T-cell (primary cell): ENCODE measurements at regions of chr12 and their contacts with region 1.

Region 1: DNA sequence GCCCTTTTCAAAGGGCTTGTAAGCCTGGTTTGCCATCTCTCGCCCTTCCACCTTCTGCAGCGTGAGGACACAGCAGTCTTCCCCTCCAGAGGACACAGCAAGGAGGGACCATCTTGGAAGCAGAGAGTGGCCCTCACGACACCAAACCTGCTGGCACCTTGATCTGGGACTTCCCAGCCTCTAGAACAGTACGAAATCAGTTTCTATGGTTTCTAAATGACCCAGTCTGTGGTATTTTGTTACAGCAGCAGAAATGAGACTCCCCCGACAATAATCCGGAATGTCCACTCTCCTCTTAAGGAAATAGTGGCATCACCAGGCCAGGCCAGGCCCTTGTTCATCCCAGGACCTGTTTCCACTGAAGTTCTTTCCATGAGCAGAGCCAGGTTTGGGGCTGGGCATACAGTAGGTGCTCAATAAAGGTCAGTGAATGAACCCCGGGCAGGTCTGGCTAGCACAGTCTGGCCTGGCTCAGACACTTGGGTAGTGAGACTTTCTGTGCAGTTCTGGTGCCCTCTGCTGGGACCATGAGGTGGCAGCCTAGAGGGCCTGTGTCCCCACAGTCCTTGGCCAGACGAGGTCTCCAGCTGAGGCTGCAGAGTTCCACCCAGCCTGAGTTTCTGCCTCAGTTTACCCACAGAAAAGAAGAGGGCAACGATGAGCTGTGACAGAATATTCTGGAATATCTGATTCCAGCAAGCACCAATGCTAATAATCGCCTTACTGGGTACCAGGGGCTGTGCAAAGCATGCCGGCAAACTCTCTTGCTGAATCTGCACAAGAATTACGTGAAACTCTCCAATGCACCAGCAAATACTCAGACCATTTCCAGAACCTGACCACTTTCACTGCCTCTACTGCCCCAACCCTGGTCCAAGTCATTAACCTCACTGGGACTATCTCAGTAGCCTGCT is 14.0 kb downstream of the ABCB9 start:
- DNase-seq: peak; percentile 42 to 86 (median 66)
- ATAC-seq: peak; percentile 93 to 99 (median 98)
- H3K4me3 ChIP-seq: no peak overlapping the region
- H3K4me3 Mint-ChIP-seq: no peak overlapping the region
- H3K27ac ChIP-seq: no peak overlapping the region
- H3K27ac Mint-ChIP-seq: no peak overlapping the region
- H3K4me1 ChIP-seq: peaks cover 0 to 14% of the 10 kb centered on the region in 2 experiments
- H3K4me1 Mint-ChIP-seq: peaks cover 5 to 12% (median 11%) of the 10 kb centered on the region in 3 donors
- H3K27me3 ChIP-seq: no peaks in the 10 kb centered on the region
- H3K27me3 Mint-ChIP-seq: no peaks in the 10 kb centered on the region

Region 2: DNA sequence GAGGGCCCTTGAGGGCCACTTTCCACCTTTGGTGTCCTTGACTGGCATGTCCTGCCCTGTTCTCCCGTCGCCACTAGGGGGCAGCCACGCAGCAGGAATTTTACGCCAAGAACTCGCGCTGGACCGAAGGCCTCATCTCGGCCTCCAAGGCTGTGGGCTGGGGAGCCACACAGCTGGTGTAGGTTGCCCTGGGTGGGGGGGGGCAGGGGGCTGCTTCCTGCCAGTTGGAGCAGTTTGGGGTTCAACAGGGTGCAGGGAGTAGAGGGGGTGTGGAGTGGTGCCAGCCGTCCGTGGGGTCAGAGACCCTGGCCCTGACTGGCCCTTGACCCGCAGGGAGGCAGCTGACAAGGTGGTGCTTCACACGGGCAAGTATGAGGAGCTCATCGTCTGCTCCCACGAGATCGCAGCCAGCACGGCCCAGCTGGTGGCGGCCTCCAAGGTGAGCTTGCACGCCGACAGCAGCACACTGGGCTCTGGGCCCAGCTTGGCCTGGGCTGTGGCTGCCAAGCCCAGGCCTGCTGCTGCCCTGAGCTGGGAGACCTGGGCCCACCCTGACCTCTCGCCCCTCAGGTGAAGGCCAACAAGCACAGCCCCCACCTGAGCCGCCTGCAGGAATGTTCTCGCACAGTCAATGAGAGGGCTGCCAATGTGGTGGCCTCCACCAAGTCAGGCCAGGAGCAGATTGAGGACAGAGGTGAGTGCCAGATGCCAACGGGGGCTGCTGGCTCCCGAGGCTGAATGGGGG is 91.7 kb before region 1 on chr12:
- CTCF ChIA-PET with region 1: interaction called, 4 to 13 read pairs
- POLR2A ChIA-PET with region 1: no interaction called
- DNase-seq: peak; percentile 45 to 87 (median 75)
- ATAC-seq: peak; percentile 46 to 71 (median 63)
- H3K4me3 ChIP-seq: no peak overlapping the region
- H3K4me3 Mint-ChIP-seq: no peak overlapping the region
- H3K27ac ChIP-seq: peak overlapping the region; percentile 32
- H3K27ac Mint-ChIP-seq: no peak overlapping the region
- H3K4me1 ChIP-seq: peaks cover 0 to 10% of the 10 kb centered on the region in 2 experiments
- H3K4me1 Mint-ChIP-seq: peaks cover 2 to 11% (median 10%) of the 10 kb centered on the region in 3 donors
- H3K27me3 ChIP-seq: no peaks in the 10 kb centered on the region
- H3K27me3 Mint-ChIP-seq: no peaks in the 10 kb centered on the region